ENCODE measurements at regions of chr22 and their contacts with region 1.

Region 1: GRCh38 chr22:39965748-39966147 is 5.6 kb downstream of the TMA7B start:
- DNase-seq: no peak
- ATAC-seq: no peak
- H3K4me3 ChIP-seq: no peak overlapping the region
- H3K27ac ChIP-seq: no peak overlapping the region
- H3K4me1 ChIP-seq: no peaks in the 10 kb centered on the region
- H3K27me3 ChIP-seq: no peaks in the 10 kb centered on the region
- CTCF ChIP-seq: no peak

Region 2: GRCh38 chr22:39820256-39820655 is 145.5 kb before region 1 on chr22:
- CTCF ChIA-PET with region 1: no interaction called
- POLR2A ChIA-PET with region 1: interaction called, 12 read pairs
- in situ Hi-C with region 1: no loop called
- intact Hi-C with region 1: no loop called
- DNase-seq: peak; percentile 15
- ATAC-seq: no peak
- H3K4me3 ChIP-seq: no peak overlapping the region
- H3K27ac ChIP-seq: no peak overlapping the region
- H3K4me1 ChIP-seq: no peaks in the 10 kb centered on the region
- H3K27me3 ChIP-seq: no peaks in the 10 kb centered on the region
- CTCF ChIP-seq: no peak